ENCODE measurements at regions of chr19 and their contacts with region 1.

Region 1: DNA sequence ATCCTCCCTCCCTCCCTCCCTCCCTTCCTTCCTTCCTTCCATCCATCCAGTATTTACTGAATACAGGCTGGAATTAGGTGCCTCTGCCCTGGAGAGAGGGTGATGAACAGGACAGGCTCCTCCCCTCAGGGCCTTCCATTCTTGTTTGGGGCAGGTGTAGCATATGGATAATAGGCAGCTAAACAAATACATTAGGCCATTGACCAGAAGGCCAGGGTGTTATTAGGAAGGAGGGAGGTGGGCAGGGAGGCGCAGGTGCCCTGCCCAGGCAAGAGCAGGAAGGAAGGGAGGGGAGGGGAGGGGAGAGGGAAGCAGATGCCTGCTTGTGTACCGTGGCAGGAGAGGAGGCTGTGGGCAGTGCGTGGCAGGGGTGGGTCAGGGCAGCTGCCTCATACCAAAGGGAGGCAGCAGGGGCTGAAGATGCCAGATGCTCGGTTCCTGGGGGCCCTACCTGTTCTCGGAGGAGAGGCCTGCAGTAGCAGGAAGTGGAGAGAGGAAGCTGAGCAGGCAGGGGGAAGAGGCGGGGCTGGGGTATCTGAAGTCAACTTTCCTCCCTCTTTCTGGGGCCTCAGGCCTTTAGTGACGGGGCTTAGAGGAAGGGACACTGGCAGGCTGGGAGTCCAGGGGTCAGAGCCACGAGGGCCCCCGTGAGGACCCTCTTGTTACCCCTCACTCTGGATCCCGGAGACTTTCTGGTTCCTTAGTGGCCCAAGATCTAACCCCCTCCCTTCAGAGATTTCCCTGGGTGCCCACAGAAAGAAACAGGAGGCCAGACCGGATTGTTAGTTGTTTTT is at the start of gene RINL:
- H3K4me3 ChIP-seq: peak within 1 kb of the TSS; percentile 25
- H3K27ac ChIP-seq: peak within 1 kb of the TSS; percentile 71
- H3K4me1 ChIP-seq: peaks cover 8% of the 10 kb centered on the region
- CTCF ChIP-seq: no peak

Region 2: GRCh38 chr19:38862321-38863059 is 15.5 kb before region 1 on chr19:
- CTCF ChIA-PET with region 1: interaction called, 21 read pairs
- POLR2A ChIA-PET with region 1: interaction called, 5 read pairs
- H3K4me3 ChIP-seq: no peak overlapping the region
- H3K27ac ChIP-seq: peak overlapping the region; percentile 91
- H3K4me1 ChIP-seq: peaks cover 18% of the 10 kb centered on the region
- CTCF ChIP-seq: no peak

Region 3: GRCh38 chr19:39001041-39001440 is 123.1 kb after region 1 on chr19:
- CTCF ChIA-PET with region 1: no interaction called
- POLR2A ChIA-PET with region 1: no interaction called
- H3K4me3 ChIP-seq: no peak overlapping the region
- H3K27ac ChIP-seq: no peak overlapping the region
- H3K4me1 ChIP-seq: peaks cover 3% of the 10 kb centered on the region
- CTCF ChIP-seq: no peak